Ovary (tissue), 10 donors: ENCODE measurements at regions of chr17 and their contacts with region 1.

Region 1: DNA sequence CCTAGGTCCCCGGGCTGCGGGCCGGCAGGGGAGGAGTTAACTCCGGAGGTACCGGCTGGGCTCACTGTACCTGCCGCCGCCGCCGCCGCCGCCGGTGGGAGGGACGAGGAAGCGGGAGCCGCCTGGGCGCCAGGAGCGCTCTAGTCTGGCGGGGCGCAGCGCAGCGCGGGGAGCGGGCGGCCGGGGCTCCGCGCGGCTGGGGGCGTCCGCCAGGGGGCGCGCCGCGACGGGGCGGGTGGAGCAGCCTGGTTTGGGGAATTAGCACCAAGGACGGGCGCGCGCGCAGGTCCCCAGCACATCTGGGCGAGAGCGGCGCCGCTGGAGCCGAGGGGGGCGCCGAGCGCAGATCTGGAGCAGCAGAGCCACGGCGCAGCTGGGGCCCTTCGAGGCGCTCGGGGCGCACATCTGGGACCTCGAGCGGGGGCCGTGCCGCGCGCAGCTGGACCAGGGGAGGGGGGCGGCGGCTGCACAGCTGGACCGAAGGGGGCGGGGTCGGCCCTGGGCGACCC is at the start of gene NXPH3:
- DNase-seq: peak; percentile 72 to 84 (median 77)
- H3K4me3 ChIP-seq: peak within 1 kb of the TSS; percentile 71
- H3K27ac ChIP-seq: peak within 1 kb of the TSS; percentile 30 to 68
- H3K4me1 ChIP-seq: peaks cover 8% of the 10 kb centered on the region
- H3K27me3 ChIP-seq: no peaks in the 10 kb centered on the region
- CTCF ChIP-seq: peak in 2 of 3 donors; percentile 71 to 82
- EP300 ChIP-seq: no peak
- POLR2A ChIP-seq: no peak
- total RNA-seq, gene NXPH3: 1.2 to 26.0 (median 10.7) TPM

Region 2: DNA sequence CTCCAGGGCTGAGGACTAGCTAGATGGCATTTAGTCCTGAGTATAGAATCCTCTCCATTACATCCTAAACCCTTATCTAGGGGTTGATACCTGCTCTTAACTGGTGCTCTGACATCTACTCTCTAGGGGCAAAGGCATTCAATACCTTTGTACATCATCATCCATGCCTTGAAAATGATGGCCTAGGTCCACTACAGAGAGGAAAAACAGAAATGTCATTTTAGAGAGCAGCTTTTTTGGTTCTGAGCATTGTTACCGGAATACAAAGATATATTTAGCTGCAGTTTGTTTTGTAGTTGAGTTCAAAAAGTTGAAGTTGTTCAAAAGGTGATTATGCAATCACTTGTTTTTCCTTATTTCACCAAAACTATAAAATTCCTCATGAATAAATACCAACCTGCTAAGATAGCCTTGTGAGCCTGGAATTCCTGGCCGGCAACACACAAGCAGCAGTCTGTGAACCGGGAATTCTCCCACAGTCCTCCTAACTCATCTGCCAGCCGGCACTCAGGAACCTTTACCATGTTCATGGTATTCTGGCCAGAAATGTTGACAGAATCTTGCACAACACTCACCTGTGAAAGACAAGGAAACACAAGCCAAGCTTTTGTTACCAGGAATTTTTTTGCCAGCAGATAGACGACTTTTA is 35.4 kb after region 1 on chr17:
- intact Hi-C with region 1: loop called in 3 of 4 experiments (anchors 5 kb)
- DNase-seq: peak in 4 of 5 donors; percentile 39 to 48 (median 44)
- H3K4me3 ChIP-seq: no peak overlapping the region
- H3K27ac ChIP-seq: peak overlapping the region in 1 of 2 donors; percentile 70
- H3K4me1 ChIP-seq: peaks cover 10% of the 10 kb centered on the region
- H3K27me3 ChIP-seq: no peaks in the 10 kb centered on the region
- CTCF ChIP-seq: no peak
- EP300 ChIP-seq: no peak
- POLR2A ChIP-seq: no peak

Region 3: GRCh38 chr17:49634485-49634860 is 58.8 kb after region 1 on chr17:
- intact Hi-C with region 1: loop called in 1 of 4 experiments (anchors 5 kb)
- DNase-seq: no peak
- H3K4me3 ChIP-seq: no peak overlapping the region
- H3K27ac ChIP-seq: peak overlapping the region in 1 of 2 donors; percentile 40
- H3K4me1 ChIP-seq: peaks cover 10% of the 10 kb centered on the region
- H3K27me3 ChIP-seq: no peaks in the 10 kb centered on the region
- CTCF ChIP-seq: no peak
- EP300 ChIP-seq: no peak
- POLR2A ChIP-seq: no peak

Region 4: GRCh38 chr17:49779739-49780231 is 204.2 kb after region 1 on chr17:
- intact Hi-C with region 1: loop called (anchors 2 to 5 kb)
- DNase-seq: peak in 2 of 5 donors; percentile 20 to 52
- H3K4me3 ChIP-seq: no peak overlapping the region
- H3K27ac ChIP-seq: no peak overlapping the region
- H3K4me1 ChIP-seq: peaks cover 4% of the 10 kb centered on the region
- H3K27me3 ChIP-seq: no peaks in the 10 kb centered on the region
- CTCF ChIP-seq: peak in 2 of 3 donors; percentile 59 to 66
- EP300 ChIP-seq: no peak
- POLR2A ChIP-seq: no peak

Region 5: DNA sequence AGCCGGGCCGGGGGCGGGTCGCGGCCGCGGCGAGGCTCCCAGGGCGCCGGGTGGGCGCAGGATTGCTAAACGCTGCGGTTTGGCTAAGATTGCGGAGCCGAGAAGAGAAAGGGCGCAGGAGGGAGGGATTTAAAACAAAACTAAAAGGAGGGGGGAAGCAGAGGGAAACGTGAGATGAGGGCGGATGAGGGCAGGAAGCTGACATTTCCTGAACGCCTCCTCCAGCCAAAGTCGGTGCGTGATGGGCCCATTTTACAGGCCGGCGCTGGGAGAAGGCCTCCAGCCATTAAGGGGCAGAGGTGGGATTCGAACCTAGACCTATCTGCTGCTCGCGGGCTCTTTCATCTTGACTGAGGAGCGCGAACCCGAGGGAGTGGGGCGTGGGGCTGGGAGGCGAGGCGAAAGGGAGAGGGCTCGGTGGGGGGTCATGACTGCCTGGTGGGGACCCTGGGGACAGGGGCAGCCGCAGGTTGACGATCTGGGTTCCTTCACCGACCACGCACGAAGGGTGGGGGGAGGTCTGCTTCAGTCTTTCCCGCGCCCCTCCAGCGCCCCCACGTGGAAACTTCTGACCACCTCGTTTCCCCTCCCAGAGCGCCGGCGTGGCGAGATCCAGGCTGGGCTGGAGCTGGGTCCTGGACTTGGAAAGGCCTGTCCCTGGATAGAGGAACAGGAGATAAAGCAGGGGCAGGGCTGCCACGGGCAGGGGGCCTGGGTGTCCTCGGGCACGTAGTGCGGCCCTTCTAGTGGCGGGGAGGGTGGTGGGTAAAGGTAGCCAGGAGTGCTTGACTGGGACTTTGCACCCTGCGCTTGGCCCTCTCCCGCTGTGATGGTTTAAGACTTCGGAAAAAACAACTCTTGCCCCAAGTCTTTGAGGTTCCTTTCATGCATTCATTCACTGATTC is 276.0 kb after region 1 on chr17:
- intact Hi-C with region 1: loop called in 1 of 4 experiments (anchors 10 kb)
- DNase-seq: peak; percentile 46 to 80 (median 77)
- H3K4me3 ChIP-seq: peak overlapping the region; percentile 31
- H3K27ac ChIP-seq: no peak overlapping the region
- H3K4me1 ChIP-seq: peaks cover 1% of the 10 kb centered on the region
- H3K27me3 ChIP-seq: no peaks in the 10 kb centered on the region
- CTCF ChIP-seq: peak; percentile 29 to 46 (median 31)
- EP300 ChIP-seq: no peak
- POLR2A ChIP-seq: no peak